Sciatic nerve (tissue), 2 donors: ENCODE measurements at regions of chr3 and their contacts with region 1.

Region 1: GRCh38 chr3:151146071-151146730 is 56.8 kb downstream of the GPR171 start:
- DNase-seq: peak; percentile 82
- ATAC-seq: peak; percentile 93

Region 2: DNA sequence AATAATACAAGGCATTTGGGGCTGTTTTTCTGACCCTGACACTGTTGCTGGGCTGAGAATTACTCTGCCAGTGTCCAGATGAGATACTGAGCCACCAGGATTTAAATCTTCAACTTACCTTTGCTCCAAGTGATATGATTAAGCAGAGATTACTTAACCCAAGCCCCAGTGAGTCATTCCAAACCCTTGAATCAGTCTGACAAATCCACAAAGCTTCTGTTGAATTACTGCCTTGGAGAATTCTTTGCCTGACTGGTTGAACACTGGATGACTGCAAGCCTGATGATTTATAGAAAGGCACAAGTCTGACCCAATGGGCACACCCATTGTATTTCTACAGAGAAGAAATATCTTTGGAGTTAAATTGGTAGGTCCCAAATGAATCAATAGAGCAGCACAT is 826.3 kb before region 1 on chr3:
- intact Hi-C with region 1: no loop called
- DNase-seq: no peak
- ATAC-seq: no peak

Region 3: DNA sequence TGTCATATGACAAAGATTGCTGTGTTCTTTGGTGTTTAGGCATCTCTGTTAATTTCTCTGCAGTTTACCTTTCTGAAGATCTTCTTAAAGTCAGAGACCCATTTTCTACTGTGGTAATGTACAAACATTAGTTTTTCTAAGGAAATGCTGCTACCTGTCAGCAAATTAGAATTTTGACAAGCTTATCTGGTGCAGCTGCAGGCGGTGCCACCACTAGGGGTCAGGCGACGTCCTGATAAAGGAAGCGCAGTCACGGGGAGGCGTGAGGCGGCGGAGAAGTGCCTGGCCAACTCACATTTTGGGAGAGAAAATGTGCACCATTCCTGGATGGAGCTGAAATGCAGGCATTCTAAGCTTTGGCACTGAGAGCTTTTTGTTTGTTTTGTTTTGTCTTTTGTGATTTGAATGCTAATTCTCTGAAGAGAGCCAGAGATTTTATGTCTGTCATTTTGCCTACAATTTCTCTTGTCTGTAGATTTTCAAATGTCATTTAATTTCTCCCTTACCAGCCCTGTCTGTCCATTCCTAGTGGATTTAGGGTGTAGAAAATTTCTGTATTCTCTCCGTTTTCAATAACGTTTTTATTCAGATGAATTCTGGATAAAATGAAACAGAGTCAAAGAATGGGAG is 358.3 kb before region 1 on chr3:
- intact Hi-C with region 1: loop called (anchors 10 kb)
- DNase-seq: peak; percentile 94
- ATAC-seq: peak; percentile 94